Mammary epithelial cell (primary cell): ENCODE measurements at regions of chr10 and their contacts with region 1.

Region 1: GRCh38 chr10:84059523-84059922 is 79.8 kb upstream of the GHITM start:
- DNase-seq: no peak
- H3K4me3 ChIP-seq: no peak overlapping the region
- H3K27ac ChIP-seq: no peak overlapping the region
- H3K4me1 ChIP-seq: no peaks in the 10 kb centered on the region
- H3K27me3 ChIP-seq: no peaks in the 10 kb centered on the region
- CTCF ChIP-seq: peak in 1 of 2 donors; percentile 22

Region 2: GRCh38 chr10:83945982-83946718 is 113.4 kb before region 1 on chr10:
- CTCF ChIA-PET with region 1: no interaction called
- dilution Hi-C with region 1: no loop called
- in situ Hi-C with region 1: no loop called
- intact Hi-C with region 1: no loop called
- DNase-seq: no peak
- H3K4me3 ChIP-seq: no peak overlapping the region
- H3K27ac ChIP-seq: no peak overlapping the region
- H3K4me1 ChIP-seq: no peaks in the 10 kb centered on the region
- H3K27me3 ChIP-seq: no peaks in the 10 kb centered on the region
- CTCF ChIP-seq: no peak

Region 3: DNA sequence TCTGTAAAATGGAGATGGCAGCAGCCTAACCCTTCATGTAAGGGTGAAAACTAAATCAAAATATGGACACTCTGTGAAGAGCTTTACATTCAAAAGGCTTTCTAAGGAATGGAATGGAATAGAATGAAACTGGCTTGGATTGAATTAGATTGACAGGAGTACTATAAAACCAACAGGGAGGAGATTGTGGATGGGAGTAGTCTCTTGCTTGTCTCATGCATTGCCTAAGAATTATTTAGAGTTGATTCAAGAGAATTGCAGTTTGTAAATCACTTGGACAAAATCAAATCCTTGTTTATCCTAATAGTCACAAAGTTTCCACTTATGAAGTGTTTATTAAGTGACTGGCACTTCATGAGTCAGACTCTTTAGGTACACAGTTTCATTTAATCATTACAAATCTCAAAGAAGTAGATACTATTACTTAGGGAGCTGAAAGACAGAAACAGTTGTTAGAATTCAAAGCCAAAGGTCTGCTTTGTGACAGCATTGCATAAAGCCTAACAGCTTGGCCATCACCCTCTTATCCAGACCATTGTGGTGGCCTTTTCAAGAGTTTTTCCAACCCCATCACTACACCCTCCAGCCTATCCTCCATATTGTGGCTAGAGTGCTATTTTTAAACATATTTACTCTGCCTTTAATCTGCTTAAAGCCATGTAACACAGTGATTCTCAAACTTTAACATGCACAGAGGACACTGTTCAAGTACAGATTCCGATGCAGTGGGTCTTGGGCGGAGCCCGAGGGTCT is 12.1 kb before region 1 on chr10:
- CTCF ChIA-PET with region 1: no interaction called
- dilution Hi-C with region 1: no loop called
- in situ Hi-C with region 1: no loop called
- intact Hi-C with region 1: no loop called
- DNase-seq: no peak
- H3K4me3 ChIP-seq: no peak overlapping the region
- H3K27ac ChIP-seq: no peak overlapping the region
- H3K4me1 ChIP-seq: no peaks in the 10 kb centered on the region
- H3K27me3 ChIP-seq: no peaks in the 10 kb centered on the region
- CTCF ChIP-seq: no peak

Region 4: GRCh38 chr10:84097787-84098353 is 38.3 kb after region 1 on chr10:
- CTCF ChIA-PET with region 1: no interaction called
- dilution Hi-C with region 1: no loop called
- in situ Hi-C with region 1: no loop called
- intact Hi-C with region 1: loop called (anchors 2 kb)
- DNase-seq: no peak
- H3K4me3 ChIP-seq: no peak overlapping the region
- H3K27ac ChIP-seq: no peak overlapping the region
- H3K4me1 ChIP-seq: no peaks in the 10 kb centered on the region
- H3K27me3 ChIP-seq: peaks cover 3% of the 10 kb centered on the region
- CTCF ChIP-seq: peak; percentile 30 to 61